ENCODE measurements at regions of chr20 and their contacts with region 1.

Region 1: DNA sequence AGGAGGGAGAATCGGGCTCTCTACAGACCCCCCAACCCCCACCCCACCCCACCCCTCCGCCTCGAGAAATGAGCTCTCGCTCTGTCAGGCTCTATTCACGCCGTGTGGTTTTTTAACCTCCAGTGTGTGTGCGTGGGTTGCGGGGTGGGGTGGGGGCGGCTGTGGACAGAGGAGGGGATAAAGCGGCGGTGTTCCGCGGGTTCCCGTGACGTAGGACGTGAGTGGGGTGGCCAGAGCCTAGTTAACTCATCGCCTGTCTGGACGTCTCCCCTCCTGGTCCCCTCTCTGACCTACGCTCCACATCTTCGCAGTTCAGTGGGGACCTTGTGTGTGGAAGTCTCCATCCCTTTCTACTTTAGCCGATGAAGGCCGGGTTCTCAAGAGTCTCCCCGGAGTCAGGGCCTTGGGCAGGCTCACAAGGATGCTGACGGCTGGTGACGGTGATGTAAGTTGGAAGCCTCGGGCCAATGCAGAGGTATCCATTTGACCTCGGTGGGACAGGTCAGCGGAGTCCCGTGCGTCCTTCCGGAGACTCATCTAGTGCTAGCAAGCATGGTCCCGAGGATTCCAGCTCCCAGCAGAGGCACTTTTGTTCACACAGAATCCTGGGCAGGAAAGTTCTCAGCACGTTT is 1507.1 kb upstream of the DEFB115 start:
- DNase-seq: no peak
- ATAC-seq: no peak
- H3K4me3 ChIP-seq: no peak overlapping the region
- H3K27ac ChIP-seq: no peak overlapping the region
- H3K4me1 ChIP-seq: no peaks in the 10 kb centered on the region
- H3K27me3 ChIP-seq: no peaks in the 10 kb centered on the region; a peak in 1 of 5 replicates
- CTCF ChIP-seq: no peak
- EP300 ChIP-seq: no peak
- POLR2A ChIP-seq: no peak
- RAD21 ChIP-seq: no peak

Region 2: DNA sequence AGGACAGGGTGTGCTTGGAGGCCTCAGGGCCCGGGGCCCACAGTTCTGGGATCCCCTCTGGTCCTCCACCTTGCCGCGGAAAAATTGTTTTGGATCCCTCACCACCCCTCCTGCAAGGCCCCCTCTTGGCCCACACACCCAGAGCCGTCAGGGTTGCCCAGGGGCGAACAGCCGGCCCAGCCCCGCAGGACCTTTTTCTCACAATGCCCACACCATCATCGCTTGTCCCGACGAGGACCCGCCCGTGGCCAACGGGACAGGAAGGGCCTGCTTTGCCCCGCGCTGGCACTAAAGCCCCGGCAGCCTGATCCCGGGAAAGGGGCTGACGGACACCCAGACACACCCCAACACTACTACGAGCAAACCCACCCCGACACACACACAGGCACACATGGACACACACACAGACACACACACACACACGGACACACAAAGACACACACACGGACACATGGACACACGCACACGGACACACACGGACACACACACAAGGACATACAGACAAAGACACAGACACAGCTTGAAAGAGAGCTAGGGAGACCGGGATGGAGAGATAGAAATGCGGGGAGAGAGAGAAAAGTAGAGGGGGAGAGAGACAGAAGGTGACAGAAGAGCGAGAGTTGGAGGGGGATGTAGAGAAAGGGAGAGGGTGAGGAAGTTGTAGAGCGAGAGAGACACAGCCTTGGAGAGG is 13.6 kb after region 1 on chr20:
- CTCF ChIA-PET with region 1: no interaction called
- POLR2A ChIA-PET with region 1: no interaction called
- in situ Hi-C with region 1: no loop called
- intact Hi-C with region 1: no loop called
- DNase-seq: no peak
- ATAC-seq: peak; percentile 47; the same call in 2 of the 3 replicates
- H3K4me3 ChIP-seq: no peak overlapping the region
- H3K27ac ChIP-seq: no peak overlapping the region
- H3K4me1 ChIP-seq: no peaks in the 10 kb centered on the region
- H3K27me3 ChIP-seq: peaks cover 1 to 8% of the 10 kb centered on the region in 2 experiments; a peak in 2 of 5 replicates
- CTCF ChIP-seq: no peak
- EP300 ChIP-seq: no peak
- POLR2A ChIP-seq: no peak
- RAD21 ChIP-seq: no peak

Region 3: DNA sequence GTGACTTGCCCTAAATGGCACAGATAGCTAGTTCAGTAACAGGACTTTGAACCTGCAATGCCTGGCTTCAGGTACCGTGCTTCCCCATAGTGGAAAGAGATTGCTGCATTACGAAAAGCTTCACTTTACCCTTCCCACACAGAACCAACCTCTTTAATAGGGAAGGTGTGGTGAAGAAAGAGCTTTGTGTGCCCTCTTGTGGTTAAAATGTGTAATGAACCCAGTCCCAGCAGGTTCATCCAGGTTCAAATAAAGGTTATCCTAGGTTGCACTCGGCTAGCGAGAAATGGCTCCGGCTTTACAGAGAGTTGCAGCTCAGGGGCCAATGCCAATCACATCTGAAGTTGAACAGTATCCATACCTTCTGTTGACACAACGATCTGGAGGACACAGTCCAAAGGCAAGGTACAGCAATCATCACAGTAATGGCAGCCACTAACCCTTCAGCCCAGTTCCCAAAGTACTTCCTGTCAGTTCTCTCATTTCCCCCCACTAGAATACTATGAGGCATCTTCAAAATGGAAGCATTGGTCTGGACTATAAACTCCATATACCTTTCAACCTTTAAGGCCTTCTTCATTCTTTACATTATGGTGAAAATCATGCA is 1510.0 kb after region 1 on chr20:
- CTCF ChIA-PET with region 1: interaction called, 4 read pairs
- POLR2A ChIA-PET with region 1: no interaction called
- in situ Hi-C with region 1: no loop called
- intact Hi-C with region 1: loop called (anchors 2 kb)
- DNase-seq: peak; percentile 66
- ATAC-seq: peak; percentile 97
- H3K4me3 ChIP-seq: no peak overlapping the region
- H3K27ac ChIP-seq: no peak overlapping the region
- H3K4me1 ChIP-seq: no peaks in the 10 kb centered on the region
- H3K27me3 ChIP-seq: no peaks in the 10 kb centered on the region
- CTCF ChIP-seq: peak; percentile 84
- EP300 ChIP-seq: no peak
- POLR2A ChIP-seq: no peak
- RAD21 ChIP-seq: peak; percentile 60